Activated CD8-positive, alpha-beta T cell treated with anti-CD3 and anti-CD28 coated beads for 36 hours (primary cell): ENCODE measurements at regions of chr12 and their contacts with region 1.

Region 1: DNA sequence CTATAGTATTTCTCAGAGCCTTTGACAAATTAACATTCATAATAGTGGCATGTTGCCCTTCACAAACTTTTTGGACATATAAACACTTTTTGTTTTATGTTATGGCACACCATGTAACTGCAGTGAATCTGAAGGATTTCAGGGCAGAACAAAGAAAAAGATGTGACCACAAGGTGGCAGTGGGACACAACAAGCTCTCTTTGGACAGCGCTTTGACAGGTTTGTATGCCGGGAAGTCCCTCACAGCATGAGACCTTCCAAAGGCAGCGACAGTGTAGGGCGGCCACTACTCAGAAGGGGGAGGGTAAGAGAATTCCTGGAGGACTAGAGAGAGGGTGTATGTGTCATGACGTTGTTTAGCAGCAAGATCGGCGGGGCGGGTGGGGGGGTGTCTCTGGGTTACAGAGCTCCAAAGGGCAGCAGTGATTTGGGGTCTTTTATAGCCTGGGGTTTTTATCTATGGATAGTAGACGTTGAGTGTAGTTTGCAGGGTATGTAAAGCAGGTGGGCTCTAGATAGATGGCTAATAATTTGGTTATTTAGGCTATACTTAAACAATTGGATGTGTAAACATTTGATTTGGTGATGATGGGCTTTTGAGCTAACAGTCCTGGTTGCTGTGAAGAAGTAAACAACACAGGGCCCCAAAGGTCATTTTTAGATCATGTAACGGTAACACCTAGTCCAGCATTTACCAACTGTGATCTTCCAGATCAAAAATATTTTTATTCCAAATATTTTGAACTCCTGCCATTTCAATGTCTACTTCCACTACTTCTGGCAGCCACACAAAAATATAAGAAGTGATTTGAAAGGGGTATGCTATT is 22.9 kb downstream of the ETFBKMT start:
- DNase-seq: peak; percentile 79
- ATAC-seq: peak; percentile 92
- H3K4me3 Mint-ChIP-seq: no peak overlapping the region
- H3K27ac Mint-ChIP-seq: peak overlapping the region; percentile 82
- H3K4me1 Mint-ChIP-seq: peaks cover 12% of the 10 kb centered on the region
- H3K27me3 Mint-ChIP-seq: no peaks in the 10 kb centered on the region
- CTCF ChIP-seq: peak; percentile 73

Region 2: DNA sequence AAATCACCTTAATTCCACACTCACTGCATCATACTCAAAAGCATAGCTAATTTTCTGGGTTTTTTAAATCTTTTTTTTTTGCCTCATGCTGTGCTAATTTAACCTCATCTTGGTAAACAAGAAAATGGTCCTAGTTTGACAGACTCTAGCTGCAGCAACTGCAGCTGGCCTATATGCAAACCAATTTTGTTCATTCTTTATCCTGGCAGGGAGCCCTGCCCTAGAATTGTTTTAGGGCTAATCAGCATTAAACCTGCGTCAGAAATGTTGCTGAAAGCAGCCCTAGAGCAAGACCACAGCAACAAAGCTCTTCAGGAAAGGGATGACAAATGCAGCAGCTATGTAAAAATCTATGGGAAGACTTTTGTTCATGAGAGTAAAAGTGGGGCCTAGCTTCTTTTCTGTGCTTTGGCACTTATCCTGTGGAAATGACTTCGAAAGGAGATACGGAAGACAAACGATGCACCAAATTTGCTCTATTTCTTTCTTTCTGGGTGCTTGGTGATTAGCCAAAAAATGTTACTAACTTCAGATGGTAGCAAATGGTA is 163.6 kb before region 1 on chr12:
- CTCF ChIA-PET with region 1: no interaction called
- POLR2A ChIA-PET with region 1: no interaction called
- intact Hi-C with region 1: no loop called
- DNase-seq: no peak
- ATAC-seq: no peak
- H3K4me3 Mint-ChIP-seq: no peak overlapping the region
- H3K27ac Mint-ChIP-seq: no peak overlapping the region
- H3K4me1 Mint-ChIP-seq: no peaks in the 10 kb centered on the region
- H3K27me3 Mint-ChIP-seq: peaks cover 1% of the 10 kb centered on the region
- CTCF ChIP-seq: no peak

Region 3: DNA sequence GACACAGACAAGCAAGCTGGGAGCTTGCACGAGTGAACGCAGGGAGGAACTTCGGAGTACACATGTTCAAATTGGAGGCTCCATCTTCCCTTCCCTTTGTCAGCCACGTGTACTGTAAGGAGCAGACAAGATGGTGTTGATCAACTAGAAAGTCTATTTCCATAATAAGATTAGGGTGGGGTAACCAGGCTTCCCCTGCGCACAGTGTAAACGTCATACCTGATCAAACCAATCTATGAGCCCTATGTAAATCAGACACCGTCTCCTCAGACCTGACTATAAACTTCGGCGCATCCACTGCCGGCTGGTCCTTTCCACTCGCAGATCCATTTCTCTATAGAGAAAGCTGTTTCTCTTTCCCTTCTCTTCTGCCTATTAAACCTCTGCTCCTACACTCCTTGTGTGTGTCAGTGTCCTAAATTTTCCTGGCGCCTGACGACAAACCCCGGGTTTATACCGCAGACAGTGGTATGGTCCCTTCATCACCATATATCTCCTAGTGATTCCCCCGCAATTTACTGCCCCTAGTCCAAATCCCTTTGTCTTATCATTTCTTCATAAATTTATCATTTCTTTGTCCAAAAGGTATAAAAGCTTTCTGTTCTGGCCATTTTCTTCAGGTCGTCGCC is 30.3 kb before region 1 on chr12:
- CTCF ChIA-PET with region 1: interaction called, 24 read pairs
- POLR2A ChIA-PET with region 1: no interaction called
- intact Hi-C with region 1: no loop called
- DNase-seq: no peak
- ATAC-seq: no peak
- H3K4me3 Mint-ChIP-seq: peak overlapping the region; percentile 24
- H3K27ac Mint-ChIP-seq: no peak overlapping the region
- H3K4me1 Mint-ChIP-seq: peaks cover 12% of the 10 kb centered on the region
- H3K27me3 Mint-ChIP-seq: no peaks in the 10 kb centered on the region
- CTCF ChIP-seq: no peak

Region 4: GRCh38 chr12:31715283-31715825 is 33.0 kb after region 1 on chr12:
- CTCF ChIA-PET with region 1: interaction called, 11 read pairs
- POLR2A ChIA-PET with region 1: no interaction called
- intact Hi-C with region 1: no loop called
- DNase-seq: no peak
- ATAC-seq: no peak
- H3K4me3 Mint-ChIP-seq: no peak overlapping the region
- H3K27ac Mint-ChIP-seq: peak overlapping the region; percentile 5
- H3K4me1 Mint-ChIP-seq: peaks cover 15% of the 10 kb centered on the region
- H3K27me3 Mint-ChIP-seq: no peaks in the 10 kb centered on the region
- CTCF ChIP-seq: no peak

Region 5: DNA sequence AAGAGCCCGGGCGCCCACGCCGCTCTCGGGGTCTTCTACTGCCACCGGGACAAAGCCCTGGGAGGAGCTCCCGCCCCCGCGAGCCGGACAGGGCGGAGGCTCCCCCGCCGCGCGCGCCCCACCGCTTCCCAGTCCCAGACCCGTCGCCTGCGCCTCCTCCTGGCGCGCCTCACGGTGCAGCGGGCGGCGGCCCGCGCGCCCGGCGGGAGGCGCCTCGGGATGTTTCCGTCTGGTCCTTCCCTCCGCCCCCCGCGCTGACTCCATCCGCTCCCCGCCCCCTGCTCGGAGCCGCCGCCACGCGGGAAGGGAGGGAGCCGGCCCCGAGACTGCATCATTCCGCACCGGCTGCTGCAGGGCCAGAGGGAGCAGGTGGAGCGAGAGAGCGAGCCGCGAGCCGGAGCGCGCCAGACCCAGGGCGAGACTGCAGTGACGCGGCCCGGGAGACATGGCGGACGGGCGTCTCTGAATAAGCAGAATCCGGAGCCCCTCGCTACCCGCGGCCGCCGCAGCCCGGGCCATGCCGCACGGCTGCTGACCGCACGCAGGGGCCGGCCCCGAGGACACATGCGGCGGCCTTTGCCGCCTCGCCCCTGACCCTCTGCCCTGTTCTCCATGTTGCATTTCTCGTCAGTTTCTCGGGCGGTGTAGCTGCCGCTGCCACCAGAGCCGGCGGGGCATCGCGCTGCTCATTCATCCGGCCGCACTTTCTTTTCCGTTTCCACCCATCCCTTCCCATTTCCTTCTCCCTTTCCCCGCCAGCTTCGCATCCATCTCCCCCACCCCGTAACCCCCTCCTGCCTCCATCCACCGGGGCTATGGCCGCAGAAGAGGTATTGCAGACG is 424.4 kb after region 1 on chr12 and contains the start of gene BICD1:
- CTCF ChIA-PET with region 1: interaction called, 12 read pairs
- POLR2A ChIA-PET with region 1: no interaction called
- intact Hi-C with region 1: no loop called
- DNase-seq: peak; percentile 81
- ATAC-seq: peak; percentile 86
- H3K4me3 Mint-ChIP-seq: peak within 1 kb of the TSS; percentile 97
- H3K27ac Mint-ChIP-seq: peak within 1 kb of the TSS; percentile 93
- H3K4me1 Mint-ChIP-seq: peaks cover 25% of the 10 kb centered on the region
- H3K27me3 Mint-ChIP-seq: peaks cover 2% of the 10 kb centered on the region
- CTCF ChIP-seq: peak; percentile 28
- total RNA-seq, gene BICD1: 12.5 to 13.2 TPM